T-cell (primary cell): ENCODE measurements at regions of chr1 and their contacts with region 1.

Region 1: DNA sequence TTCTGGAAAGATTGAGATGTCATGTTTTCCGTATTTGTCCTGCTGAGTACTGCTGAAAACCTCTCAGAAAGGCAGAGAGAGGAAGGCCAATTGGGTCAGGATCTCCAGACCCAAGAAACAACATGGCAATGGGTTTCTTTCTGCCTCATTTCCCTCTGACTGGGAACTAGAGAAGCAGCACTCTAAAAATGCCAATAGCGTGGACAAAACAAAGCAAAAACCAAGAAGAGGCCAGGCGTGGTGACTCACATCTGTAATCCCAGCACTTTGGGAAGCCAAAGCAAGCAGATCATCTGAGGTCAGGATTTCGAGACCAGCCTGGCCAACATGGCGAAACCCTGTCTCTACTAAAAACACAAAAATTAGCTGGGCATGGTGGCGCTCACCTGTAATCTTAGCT is 18.3 kb downstream of the TNFRSF9 start:
- DNase-seq: no peak
- ATAC-seq: no peak
- H3K4me3 ChIP-seq: no peak overlapping the region
- H3K4me3 Mint-ChIP-seq: no peak overlapping the region
- H3K27ac ChIP-seq: no peak overlapping the region
- H3K27ac Mint-ChIP-seq: no peak overlapping the region
- H3K4me1 ChIP-seq: peaks cover 0 to 1% of the 10 kb centered on the region in 2 experiments
- H3K4me1 Mint-ChIP-seq: peaks cover 0 to 12% (median 4%) of the 10 kb centered on the region in 3 donors
- H3K27me3 ChIP-seq: no peaks in the 10 kb centered on the region
- H3K27me3 Mint-ChIP-seq: no peaks in the 10 kb centered on the region

Region 2: DNA sequence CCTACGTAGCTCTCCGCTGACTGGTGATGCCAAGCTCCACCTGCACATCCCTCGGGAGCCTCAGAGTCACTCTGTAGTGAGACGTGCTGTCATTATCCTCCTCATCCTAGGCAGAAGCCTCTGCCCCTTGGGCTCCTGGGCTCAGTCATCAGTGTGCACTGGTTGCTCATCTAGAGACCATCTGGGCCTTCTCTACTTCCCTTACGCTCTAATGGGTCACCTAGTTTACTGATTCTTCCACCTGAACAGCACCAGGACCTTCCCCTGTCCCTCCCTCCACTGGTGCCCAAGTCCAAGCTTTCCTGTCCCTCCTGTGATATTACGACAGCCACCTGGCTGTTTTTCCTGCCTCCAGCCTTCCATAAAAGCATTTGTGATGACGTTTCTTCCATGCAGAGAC is 239.9 kb after region 1 on chr1:
- CTCF ChIA-PET with region 1: no interaction called
- POLR2A ChIA-PET with region 1: interaction called in 1 of 2 experiments, 11 read pairs
- DNase-seq: no peak
- ATAC-seq: no peak
- H3K4me3 ChIP-seq: no peak overlapping the region
- H3K4me3 Mint-ChIP-seq: no peak overlapping the region
- H3K27ac ChIP-seq: no peak overlapping the region
- H3K27ac Mint-ChIP-seq: no peak overlapping the region
- H3K4me1 ChIP-seq: peaks cover 0 to 11% of the 10 kb centered on the region in 2 experiments
- H3K4me1 Mint-ChIP-seq: peaks cover 16 to 19% (median 17%) of the 10 kb centered on the region in 3 donors
- H3K27me3 ChIP-seq: peaks cover 0 to 6% of the 10 kb centered on the region in 2 experiments
- H3K27me3 Mint-ChIP-seq: peaks cover 0 to 4% of the 10 kb centered on the region in 2 donors